Activated naive CD4-positive, alpha-beta T cell treated with anti-CD3 and anti-CD28 coated beads for 36 hours (primary cell): ENCODE measurements at regions of chrX and their contacts with region 1.

Region 1: DNA sequence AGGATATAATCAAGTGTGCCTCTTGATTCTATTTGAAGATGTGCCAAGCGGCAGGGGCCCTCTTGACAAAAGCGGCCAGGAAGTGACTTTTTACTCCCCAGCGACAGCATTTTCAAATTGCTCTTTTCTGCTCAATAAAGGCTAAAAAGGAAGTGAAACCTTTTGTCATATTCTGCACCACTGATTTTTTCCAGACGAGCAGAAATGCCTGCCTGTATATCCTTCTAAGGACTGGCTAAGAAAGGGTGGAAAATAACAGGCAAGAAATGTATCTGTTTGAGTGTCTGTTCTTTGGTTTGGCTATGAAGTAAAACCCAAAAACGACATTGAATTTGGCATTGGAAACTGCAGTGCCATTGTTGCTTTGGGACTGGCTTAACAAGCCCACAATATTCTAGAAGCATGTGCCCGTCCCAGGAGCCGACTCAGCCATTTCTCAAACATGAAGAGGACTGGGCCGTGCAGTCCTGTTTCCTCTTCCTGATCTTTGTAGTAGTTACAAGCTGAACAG is 25.4 kb downstream of the TMSB4X start:
- DNase-seq: peak; percentile 69
- H3K4me3 Mint-ChIP-seq: peak overlapping the region; percentile 65
- H3K27ac Mint-ChIP-seq: peak overlapping the region; percentile 92
- H3K4me1 Mint-ChIP-seq: peaks cover 67% of the 10 kb centered on the region
- H3K27me3 Mint-ChIP-seq: no peaks in the 10 kb centered on the region

Region 2: GRCh38 chrX:12153741-12154140 is 846.6 kb before region 1 on chrX:
- CTCF ChIA-PET with region 1: no interaction called
- intact Hi-C with region 1: no loop called
- DNase-seq: no peak
- H3K4me3 Mint-ChIP-seq: no peak overlapping the region
- H3K27ac Mint-ChIP-seq: no peak overlapping the region
- H3K4me1 Mint-ChIP-seq: no peaks in the 10 kb centered on the region
- H3K27me3 Mint-ChIP-seq: no peaks in the 10 kb centered on the region

Region 3: DNA sequence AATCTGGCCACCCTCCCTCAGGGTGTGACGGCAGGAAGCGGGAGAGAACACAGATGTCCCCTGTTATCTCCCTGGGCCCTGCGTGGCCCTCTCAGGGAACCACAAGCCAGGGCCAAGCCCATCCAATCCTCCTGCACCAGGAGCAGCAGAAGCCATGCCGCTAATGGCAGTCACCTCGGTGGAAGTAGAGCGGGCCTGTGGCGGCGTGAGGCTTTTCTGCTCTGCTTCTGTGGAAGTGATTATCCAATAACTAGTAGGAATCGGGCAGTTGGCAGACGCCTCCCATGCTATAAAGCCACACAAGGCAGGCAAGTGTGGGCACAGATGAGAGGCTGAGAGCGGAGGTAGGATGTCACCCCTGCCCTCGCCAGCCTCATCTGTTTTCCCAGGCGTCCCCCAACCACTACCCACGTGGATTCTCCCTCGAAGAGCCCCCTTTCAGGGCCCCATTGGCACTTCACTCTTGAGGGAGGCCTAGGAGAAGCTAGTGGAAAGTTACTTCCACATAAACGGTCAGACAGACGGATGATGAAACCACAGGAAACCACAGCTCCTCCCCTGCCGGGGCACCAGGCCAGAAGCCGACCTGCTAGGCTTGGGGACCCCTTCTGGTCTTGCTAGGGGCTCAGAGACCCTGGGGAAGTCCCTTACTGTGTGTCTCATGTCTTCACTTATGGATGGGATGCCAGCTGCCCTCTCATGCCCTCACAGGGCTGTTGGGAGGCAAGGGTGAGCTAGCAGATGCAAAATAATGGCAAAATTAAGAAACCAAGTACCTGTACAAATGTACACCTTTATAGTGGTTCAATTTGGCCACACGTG is 44.3 kb before region 1 on chrX:
- CTCF ChIA-PET with region 1: interaction called, 5 read pairs
- intact Hi-C with region 1: loop called (anchors 1 kb)
- DNase-seq: peak; percentile 81
- H3K4me3 Mint-ChIP-seq: peak overlapping the region; percentile 83
- H3K27ac Mint-ChIP-seq: peak overlapping the region; percentile 98
- H3K4me1 Mint-ChIP-seq: peaks cover 68% of the 10 kb centered on the region
- H3K27me3 Mint-ChIP-seq: no peaks in the 10 kb centered on the region

Region 4: DNA sequence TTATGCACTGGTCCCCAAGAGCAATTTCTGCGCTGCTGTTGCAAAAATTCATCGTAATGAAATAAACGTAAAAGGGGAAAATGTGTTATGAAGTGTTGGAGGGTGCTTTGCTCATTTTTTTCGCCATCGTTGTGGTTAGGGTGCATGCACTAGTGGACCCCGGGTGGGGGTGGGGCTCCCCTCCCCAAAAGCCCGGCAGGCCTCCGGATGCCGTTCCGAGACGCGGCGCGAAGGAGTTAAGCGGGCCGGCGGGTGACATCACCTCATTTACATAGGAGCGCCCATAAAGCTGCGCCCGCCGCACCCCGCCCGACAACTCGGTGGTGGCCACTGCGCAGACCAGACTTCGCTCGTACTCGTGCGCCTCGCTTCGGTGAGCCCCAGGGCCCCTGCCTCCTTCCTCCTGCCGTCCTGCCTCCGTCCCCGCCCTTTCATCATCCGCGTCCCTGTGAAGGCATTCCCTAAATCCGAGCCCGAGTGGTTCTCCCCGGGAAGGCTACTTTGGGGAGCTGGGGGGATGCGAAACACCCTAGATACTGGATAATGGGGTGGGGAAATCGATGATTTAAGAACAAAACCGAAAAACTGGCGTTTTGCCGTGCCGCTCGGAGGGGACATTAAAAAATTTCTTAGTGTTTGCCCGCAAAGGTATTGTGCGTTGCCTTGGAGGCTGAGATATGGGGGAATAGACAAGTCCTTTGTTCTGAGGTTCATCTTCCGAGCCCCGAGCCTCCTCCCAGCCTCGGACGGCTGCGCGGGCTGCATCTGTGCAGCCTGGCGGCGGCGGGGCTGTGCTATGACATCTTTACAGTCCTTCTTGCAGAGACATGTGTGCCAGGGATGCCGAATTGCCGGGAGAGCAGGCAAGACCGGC is 25.3 kb before region 1 on chrX and contains the start of gene TMSB4X:
- CTCF ChIA-PET with region 1: interaction called, 4 read pairs
- intact Hi-C with region 1: loop called (anchors 1 kb)
- DNase-seq: peak; percentile 84
- H3K4me3 Mint-ChIP-seq: peak within 1 kb of the TSS; percentile 82
- H3K27ac Mint-ChIP-seq: peak within 1 kb of the TSS; percentile 96
- H3K4me1 Mint-ChIP-seq: peaks cover 18% of the 10 kb centered on the region
- H3K27me3 Mint-ChIP-seq: no peaks in the 10 kb centered on the region
- total RNA-seq, gene TMSB4X: 5,535 to 5,691 TPM

Region 5: GRCh38 chrX:12984629-12985319 is 15.6 kb before region 1 on chrX:
- CTCF ChIA-PET with region 1: interaction called, 8 read pairs
- intact Hi-C with region 1: loop called (anchors 1 kb)
- DNase-seq: peak; percentile 54
- H3K4me3 Mint-ChIP-seq: peak overlapping the region; percentile 54
- H3K27ac Mint-ChIP-seq: peak overlapping the region; percentile 95
- H3K4me1 Mint-ChIP-seq: peaks cover 77% of the 10 kb centered on the region
- H3K27me3 Mint-ChIP-seq: no peaks in the 10 kb centered on the region

Region 6: GRCh38 chrX:13013363-13014110 is 13.2 kb after region 1 on chrX:
- CTCF ChIA-PET with region 1: interaction called, 3 read pairs
- intact Hi-C with region 1: loop called (anchors 1 kb)
- DNase-seq: peak; percentile 47
- H3K4me3 Mint-ChIP-seq: peak overlapping the region; percentile 51
- H3K27ac Mint-ChIP-seq: peak overlapping the region; percentile 53
- H3K4me1 Mint-ChIP-seq: peaks cover 70% of the 10 kb centered on the region
- H3K27me3 Mint-ChIP-seq: no peaks in the 10 kb centered on the region

Region 7: DNA sequence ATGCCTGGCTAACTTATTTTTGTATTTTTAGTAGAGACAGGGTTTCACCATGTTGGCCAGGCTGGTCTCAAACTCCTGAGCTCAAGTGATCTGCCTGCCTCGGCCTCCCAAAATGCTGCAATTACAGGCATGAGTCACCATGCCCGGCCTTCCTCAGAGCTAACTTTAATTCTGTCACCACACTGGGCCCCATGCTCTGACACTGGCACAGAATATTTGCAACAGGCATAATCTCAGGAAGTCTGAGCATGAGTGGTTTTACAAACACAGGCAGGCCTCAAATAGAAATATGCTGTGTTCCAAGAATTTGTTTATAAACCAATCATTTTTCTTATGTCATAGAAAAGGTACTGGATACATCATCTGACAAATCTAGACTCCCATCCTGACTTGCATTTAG is 76.8 kb after region 1 on chrX:
- CTCF ChIA-PET with region 1: interaction called, 3 read pairs
- intact Hi-C with region 1: loop called (anchors 1 kb)
- DNase-seq: peak; percentile 69
- H3K4me3 Mint-ChIP-seq: no peak overlapping the region
- H3K27ac Mint-ChIP-seq: peak overlapping the region; percentile 80
- H3K4me1 Mint-ChIP-seq: peaks cover 72% of the 10 kb centered on the region
- H3K27me3 Mint-ChIP-seq: no peaks in the 10 kb centered on the region

Region 8: DNA sequence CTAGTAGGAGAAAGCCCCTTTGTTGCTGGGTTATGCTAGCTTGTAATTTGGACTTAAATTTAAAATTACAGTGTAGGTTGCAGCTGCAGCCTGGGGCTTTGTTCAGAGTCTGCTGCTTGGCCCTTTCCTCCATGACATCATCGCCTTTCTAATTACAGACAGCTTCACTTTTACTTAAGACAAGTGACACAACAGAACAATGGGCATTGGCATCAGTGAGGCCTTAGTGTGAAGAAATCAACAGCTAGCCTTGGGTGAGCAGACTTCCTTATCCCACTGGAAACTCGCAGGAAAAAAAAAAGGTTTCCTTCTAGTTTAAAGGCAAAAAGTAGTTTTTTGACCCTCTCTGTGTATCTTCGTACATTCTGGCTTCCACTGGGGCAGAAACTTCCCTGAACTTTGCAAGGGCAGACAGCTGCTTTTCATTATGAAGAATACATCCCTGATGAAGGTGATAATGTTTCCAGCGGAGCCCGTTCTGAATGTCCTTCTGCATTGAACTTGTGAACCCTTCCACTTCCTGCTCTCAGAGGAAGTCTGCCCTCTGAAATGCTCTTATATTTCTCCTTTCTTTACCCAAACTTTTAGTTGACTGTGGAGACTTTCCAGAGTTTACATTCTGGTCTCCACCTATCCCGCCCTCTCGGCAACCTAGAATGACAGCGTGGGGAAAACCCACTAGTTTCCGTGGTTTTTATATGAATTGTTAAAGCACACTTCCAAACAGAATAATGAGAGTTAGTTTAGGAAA is 167.3 kb after region 1 on chrX:
- CTCF ChIA-PET with region 1: interaction called, 3 read pairs
- intact Hi-C with region 1: loop called (anchors 5 kb)
- DNase-seq: peak; percentile 37
- H3K4me3 Mint-ChIP-seq: peak overlapping the region; percentile 45
- H3K27ac Mint-ChIP-seq: peak overlapping the region; percentile 82
- H3K4me1 Mint-ChIP-seq: peaks cover 18% of the 10 kb centered on the region
- H3K27me3 Mint-ChIP-seq: no peaks in the 10 kb centered on the region